Ascending aorta (tissue), 2 donors: ENCODE measurements at regions of chr2 and their contacts with region 1.

Region 1: DNA sequence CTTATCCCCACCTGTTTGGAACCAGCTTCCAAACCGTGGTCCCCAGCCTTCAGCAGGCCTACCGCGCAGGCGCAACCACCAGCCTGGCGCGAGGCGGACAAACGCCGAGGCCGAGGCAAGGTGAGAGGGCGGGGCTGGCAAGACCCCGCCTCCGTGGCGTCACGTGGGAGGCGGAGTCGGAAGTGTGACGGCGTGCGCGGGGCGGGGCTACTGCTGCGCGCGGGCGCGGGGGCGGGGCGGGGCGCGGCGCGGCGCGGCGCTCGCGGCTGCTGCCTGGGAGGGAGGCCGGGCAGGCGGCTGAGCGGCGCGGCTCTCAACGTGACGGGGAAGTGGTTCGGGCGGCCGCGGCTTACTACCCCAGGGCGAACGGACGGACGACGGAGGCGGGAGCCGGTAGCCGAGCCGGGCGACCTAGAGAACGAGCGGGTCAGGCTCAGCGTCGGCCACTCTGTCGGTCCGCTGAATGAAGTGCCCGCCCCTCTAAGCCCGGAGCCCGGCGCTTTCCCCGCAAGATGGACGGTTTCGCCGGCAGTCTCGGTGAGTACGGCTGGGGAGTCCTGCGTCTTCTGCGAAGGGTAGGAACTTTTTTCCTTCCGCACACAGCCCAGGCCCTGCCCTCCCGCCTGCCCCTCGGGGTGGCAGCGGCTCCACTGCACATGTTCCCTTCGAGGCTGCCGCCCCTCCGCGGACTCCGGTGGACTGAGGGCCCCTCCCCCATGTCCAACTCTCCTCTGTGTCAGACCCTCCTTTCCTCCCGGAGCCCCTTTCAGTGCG is at the start of gene EML4:
- DNase-seq: peak; percentile 54 to 94
- H3K4me3 ChIP-seq: peak within 1 kb of the TSS; percentile 89 to 96
- H3K27ac ChIP-seq: peak within 1 kb of the TSS; percentile 91 to 92
- H3K4me1 ChIP-seq: peaks cover 6 to 25% of the 10 kb centered on the region in 2 donors
- H3K27me3 ChIP-seq: no peaks in the 10 kb centered on the region
- CTCF ChIP-seq: no peak
- total RNA-seq, gene EML4: 25.2 TPM

Region 2: GRCh38 chr2:42047488-42048298 is 121.6 kb before region 1 on chr2 and contains the start of gene PKDCC:
- intact Hi-C with region 1: loop called (anchors 5 kb)
- DNase-seq: peak in 1 of 2 donors; percentile 92
- H3K4me3 ChIP-seq: peak within 1 kb of the TSS; percentile 84 to 97
- H3K27ac ChIP-seq: peak within 1 kb of the TSS; percentile 97 to 98
- H3K4me1 ChIP-seq: peaks cover 3 to 28% of the 10 kb centered on the region in 2 donors
- H3K27me3 ChIP-seq: no peaks in the 10 kb centered on the region
- CTCF ChIP-seq: no peak
- total RNA-seq, gene PKDCC: 210 TPM

Region 3: GRCh38 chr2:42095923-42096408 is 73.3 kb before region 1 on chr2:
- intact Hi-C with region 1: loop called (anchors 1 kb)
- DNase-seq: peak in 1 of 2 donors; percentile 88
- H3K4me3 ChIP-seq: no peak overlapping the region
- H3K27ac ChIP-seq: no peak overlapping the region
- H3K4me1 ChIP-seq: peaks cover 0 to 18% of the 10 kb centered on the region in 2 donors
- H3K27me3 ChIP-seq: no peaks in the 10 kb centered on the region
- CTCF ChIP-seq: peak; percentile 67 to 88 (median 87)

Region 4: DNA sequence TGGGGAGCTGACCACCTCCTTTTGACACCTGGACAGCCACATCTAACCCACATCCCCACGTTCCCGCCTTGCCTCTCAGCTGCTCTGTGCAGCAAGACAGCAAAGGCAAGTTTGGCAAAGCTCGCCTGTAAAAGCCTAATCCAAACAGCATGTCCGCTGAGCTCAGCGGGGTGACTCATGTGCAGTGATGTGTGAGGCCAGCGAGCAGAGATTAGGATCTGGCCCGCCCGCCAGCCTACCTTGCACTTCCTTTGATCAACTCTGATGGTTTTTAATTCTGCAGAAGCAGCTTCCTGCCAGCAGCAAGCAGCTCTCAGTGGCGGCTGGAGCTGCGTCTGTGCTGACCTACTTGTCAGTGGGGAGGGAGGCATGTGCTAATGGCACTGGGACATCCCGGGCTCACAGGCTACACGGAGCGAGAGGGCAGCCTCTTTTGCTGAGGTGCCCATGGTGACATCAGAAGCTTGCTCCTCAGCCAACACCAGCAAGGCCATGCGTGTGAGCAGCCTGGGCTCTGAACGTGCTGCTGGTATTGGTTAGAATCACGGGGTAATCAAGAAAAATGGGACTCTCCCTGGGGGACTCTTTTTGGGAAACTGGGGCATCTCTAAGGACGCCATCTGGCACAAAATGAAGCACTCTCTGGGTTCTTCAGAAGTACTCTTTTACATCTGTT is 36.2 kb before region 1 on chr2:
- intact Hi-C with region 1: loop called (anchors 1 kb)
- DNase-seq: peak; percentile 82 to 95
- H3K4me3 ChIP-seq: peak overlapping the region; percentile 31 to 56
- H3K27ac ChIP-seq: peak overlapping the region; percentile 75 to 81
- H3K4me1 ChIP-seq: peaks cover 0 to 20% of the 10 kb centered on the region in 2 donors
- H3K27me3 ChIP-seq: no peaks in the 10 kb centered on the region
- CTCF ChIP-seq: no peak

Region 5: GRCh38 chr2:42141687-42142546 is 27.4 kb before region 1 on chr2:
- intact Hi-C with region 1: loop called (anchors 2 kb)
- DNase-seq: peak in 1 of 2 donors; percentile 78
- H3K4me3 ChIP-seq: peak overlapping the region; percentile 15 to 40
- H3K27ac ChIP-seq: peak overlapping the region; percentile 65 to 84
- H3K4me1 ChIP-seq: peaks cover 6 to 29% of the 10 kb centered on the region in 2 donors
- H3K27me3 ChIP-seq: no peaks in the 10 kb centered on the region
- CTCF ChIP-seq: no peak